ENCODE measurements at regions of chr1 and their contacts with region 1.

Region 1: GRCh38 chr1:44799770-44800584 is at the start of gene PLK3:
- DNase-seq: peak; percentile 97
- H3K4me3 Mint-ChIP-seq: peak within 1 kb of the TSS; percentile 86
- H3K27ac Mint-ChIP-seq: peak within 1 kb of the TSS; percentile 100
- H3K4me1 Mint-ChIP-seq: peaks cover 23% of the 10 kb centered on the region
- H3K27me3 Mint-ChIP-seq: no peaks in the 10 kb centered on the region
- CTCF ChIP-seq: peak; percentile 85
- total RNA-seq, gene PLK3: 47.2 and 68.0 TPM in 2 replicates

Region 2: DNA sequence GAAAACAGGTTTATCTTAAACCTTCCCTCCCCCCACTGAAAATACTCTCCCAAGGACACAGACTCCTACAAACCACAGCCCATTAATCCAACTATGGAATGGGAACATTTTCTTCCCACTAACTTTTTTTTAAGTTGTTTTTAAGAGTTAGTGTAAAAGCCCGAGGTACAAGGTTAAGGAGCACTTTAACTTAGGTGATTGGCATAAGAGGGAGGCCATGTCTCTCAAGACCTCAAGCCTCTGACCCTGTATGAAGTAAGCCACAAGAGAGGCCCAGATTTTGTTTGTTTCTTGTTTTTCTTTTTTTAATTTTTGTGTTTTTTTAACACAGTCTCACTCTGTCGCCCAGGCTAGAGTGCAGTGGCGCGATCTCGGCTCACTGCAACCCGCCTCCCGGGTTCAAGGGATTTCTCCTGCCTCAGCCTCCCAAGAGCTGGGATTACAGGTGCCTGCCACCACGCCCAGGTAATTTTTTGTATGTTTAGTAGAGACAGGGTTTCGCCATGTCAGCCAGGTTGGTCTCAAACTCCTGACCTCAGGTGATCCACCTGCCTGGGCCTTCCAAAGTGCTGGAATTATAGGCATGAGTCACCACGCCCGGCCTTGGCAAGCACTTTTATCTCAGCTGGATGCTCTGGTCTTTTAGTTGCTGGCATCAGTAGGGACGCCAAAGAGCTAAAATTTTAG is 111.1 kb before region 1 on chr1:
- CTCF ChIA-PET with region 1: no interaction called
- POLR2A ChIA-PET with region 1: no interaction called
- intact Hi-C with region 1: no loop called
- DNase-seq: peak; percentile 57
- H3K4me3 Mint-ChIP-seq: no peak overlapping the region
- H3K27ac Mint-ChIP-seq: no peak overlapping the region
- H3K4me1 Mint-ChIP-seq: peaks cover 4% of the 10 kb centered on the region
- H3K27me3 Mint-ChIP-seq: no peaks in the 10 kb centered on the region
- CTCF ChIP-seq: no peak

Region 3: DNA sequence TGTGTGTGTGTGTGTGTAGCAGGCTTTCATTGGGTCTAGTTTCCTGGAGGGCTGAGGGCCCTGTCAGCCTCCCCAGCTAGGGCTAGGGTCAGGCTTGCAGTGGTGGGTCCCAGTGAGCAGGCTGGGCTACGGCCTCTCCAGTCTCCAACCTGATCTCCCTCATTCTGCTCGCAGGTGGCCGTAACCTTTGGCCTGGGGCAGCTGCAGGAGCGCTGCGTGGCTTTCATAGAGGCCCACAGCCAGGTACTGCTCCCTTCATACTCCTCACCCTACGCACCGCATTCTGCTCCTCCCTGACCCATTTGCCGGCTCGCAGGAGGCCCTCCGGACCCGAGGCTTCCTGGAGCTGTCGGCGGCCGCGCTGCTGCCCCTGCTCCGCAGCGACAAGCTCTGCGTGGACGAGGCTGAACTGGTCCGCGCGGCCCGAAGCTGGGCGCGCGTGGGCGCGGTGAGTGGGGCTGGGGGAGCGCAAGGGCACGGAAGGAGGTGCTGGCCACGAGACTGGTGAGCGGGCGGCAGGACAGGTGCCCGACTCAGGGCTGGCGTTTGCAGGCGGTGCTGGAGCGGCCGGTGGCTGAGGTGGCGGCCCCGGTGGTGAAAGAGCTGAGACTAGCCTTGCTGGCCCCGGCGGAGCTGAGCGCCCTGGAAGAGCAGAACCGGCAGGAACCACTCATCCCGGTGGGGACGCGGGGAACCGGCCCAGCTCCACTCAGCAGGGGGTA is 13.0 kb after region 1 on chr1:
- CTCF ChIA-PET with region 1: interaction called, 3 read pairs
- POLR2A ChIA-PET with region 1: interaction called, 50 read pairs
- intact Hi-C with region 1: loop called (anchors 2 kb)
- DNase-seq: no peak
- H3K4me3 Mint-ChIP-seq: no peak overlapping the region
- H3K27ac Mint-ChIP-seq: no peak overlapping the region
- H3K4me1 Mint-ChIP-seq: peaks cover 46% of the 10 kb centered on the region
- H3K27me3 Mint-ChIP-seq: no peaks in the 10 kb centered on the region
- CTCF ChIP-seq: no peak

Measured in MCF 10A (cell line).